Heart right ventricle (tissue), 16 donors: ENCODE measurements at regions of chr18 and their contacts with region 1.

Region 1: DNA sequence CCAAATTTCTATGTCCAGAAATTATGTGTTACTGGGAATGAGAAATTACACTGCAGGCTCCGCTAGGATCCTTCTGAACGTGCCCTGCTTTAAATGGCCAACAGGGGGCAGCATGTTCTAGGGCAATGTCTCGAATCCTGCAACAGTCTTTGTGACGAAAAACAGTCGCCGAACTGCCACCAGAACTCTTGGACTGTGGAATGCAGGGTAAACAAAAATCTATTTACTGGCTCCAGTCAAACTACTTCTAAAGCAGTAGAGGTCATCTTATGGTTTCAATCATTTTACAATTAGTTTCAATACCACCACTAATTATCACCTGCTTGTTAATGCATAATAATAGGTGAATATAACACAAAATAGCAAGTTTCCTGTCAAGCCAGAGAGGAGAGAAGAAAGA is 9.8 kb upstream of the ZNF397 start:
- DNase-seq: peak; percentile 68 to 88
- ATAC-seq: peak; percentile 80 to 95 (median 90)
- H3K4me3 ChIP-seq: peak overlapping the region in 4 of 10 donors; percentile 18 to 33 (median 20)
- H3K27ac ChIP-seq: no peak overlapping the region
- H3K4me1 ChIP-seq: peaks cover 0 to 3% (median 0%) of the 10 kb centered on the region in 9 donors
- H3K27me3 ChIP-seq: no peaks in the 10 kb centered on the region
- CTCF ChIP-seq: peak; percentile 84 to 98 (median 94)

Region 2: GRCh38 chr18:34929336-34929780 is 301.7 kb before region 1 on chr18:
- intact Hi-C with region 1: no loop called
- DNase-seq: no peak
- ATAC-seq: no peak
- H3K4me3 ChIP-seq: no peak overlapping the region
- H3K27ac ChIP-seq: no peak overlapping the region
- H3K4me1 ChIP-seq: peaks cover 0 to 6% (median 0%) of the 10 kb centered on the region in 9 donors
- H3K27me3 ChIP-seq: no peaks in the 10 kb centered on the region
- CTCF ChIP-seq: no peak

Region 3: DNA sequence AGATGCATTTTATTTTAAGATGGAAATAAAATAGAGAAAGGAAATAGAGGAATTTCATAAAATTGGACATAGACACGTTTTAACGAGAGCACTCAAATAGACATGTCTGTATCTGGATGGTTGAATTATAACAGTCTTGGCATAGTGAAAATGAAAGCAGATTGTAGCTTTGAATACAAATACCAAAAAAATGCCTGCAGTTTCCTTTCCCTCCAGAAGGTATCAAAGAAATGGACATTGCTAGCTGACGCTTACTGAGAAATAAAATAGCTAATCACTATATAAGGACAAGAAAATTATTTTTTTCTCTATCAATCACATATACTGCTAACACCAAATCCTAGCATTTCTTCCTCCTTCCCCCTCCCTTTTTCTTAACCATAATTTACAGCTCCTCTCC is 201.3 kb before region 1 on chr18:
- intact Hi-C with region 1: loop called in 1 of 10 experiments (anchors 10 kb)
- DNase-seq: no peak
- ATAC-seq: peak in 4 of 8 donors; percentile 39 to 56 (median 50)
- H3K4me3 ChIP-seq: peak overlapping the region in 9 of 10 donors; percentile 4 to 50 (median 36)
- H3K27ac ChIP-seq: peak overlapping the region in 9 of 10 donors; percentile 3 to 92 (median 42)
- H3K4me1 ChIP-seq: peaks cover 8 to 45% (median 30%) of the 10 kb centered on the region in 9 donors
- H3K27me3 ChIP-seq: no peaks in the 10 kb centered on the region
- CTCF ChIP-seq: peak in 4 of 9 donors; percentile 15 to 36 (median 28)

Region 4: GRCh38 chr18:35122586-35123224 is 108.3 kb before region 1 on chr18:
- intact Hi-C with region 1: no loop called
- DNase-seq: no peak
- ATAC-seq: peak in 7 of 8 donors; percentile 41 to 71 (median 60)
- H3K4me3 ChIP-seq: no peak overlapping the region
- H3K27ac ChIP-seq: peak overlapping the region in 6 of 10 donors; percentile 9 to 50 (median 23)
- H3K4me1 ChIP-seq: peaks cover 11 to 76% (median 56%) of the 10 kb centered on the region in 9 donors
- H3K27me3 ChIP-seq: no peaks in the 10 kb centered on the region
- CTCF ChIP-seq: peak in 6 of 9 donors; percentile 19 to 51 (median 39)

Region 5: DNA sequence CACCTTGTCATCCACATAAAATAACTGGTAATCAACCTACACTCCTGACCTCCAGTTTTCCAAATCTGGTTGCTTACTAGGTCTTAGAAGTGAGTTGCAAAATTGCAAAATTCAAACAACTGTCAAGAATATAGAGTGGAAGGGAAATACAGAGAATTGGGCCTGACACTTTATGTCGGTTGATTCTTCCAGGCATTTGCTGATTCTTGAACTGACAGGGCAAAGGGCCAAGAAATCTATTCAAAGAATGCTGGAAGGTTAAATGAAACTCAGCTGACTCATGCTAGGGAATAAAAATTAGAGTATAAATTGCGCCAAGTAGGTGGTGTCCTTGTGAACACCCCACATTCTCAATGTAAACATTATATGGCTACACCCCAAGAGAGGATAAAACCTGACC is 80.4 kb after region 1 on chr18:
- intact Hi-C with region 1: no loop called
- DNase-seq: no peak
- ATAC-seq: no peak
- H3K4me3 ChIP-seq: no peak overlapping the region
- H3K27ac ChIP-seq: peak overlapping the region in 1 of 10 donors; percentile 35
- H3K4me1 ChIP-seq: peaks cover 0 to 6% (median 0%) of the 10 kb centered on the region in 9 donors
- H3K27me3 ChIP-seq: no peaks in the 10 kb centered on the region
- CTCF ChIP-seq: no peak

Region 6: GRCh38 chr18:35355140-35355618 is 124.1 kb after region 1 on chr18:
- intact Hi-C with region 1: loop called (anchors 1 to 5 kb)
- DNase-seq: peak; percentile 54 to 75
- ATAC-seq: peak; percentile 87 to 99 (median 96)
- H3K4me3 ChIP-seq: peak overlapping the region in 4 of 10 donors; percentile 11 to 32 (median 30)
- H3K27ac ChIP-seq: no peak overlapping the region
- H3K4me1 ChIP-seq: peaks cover 0 to 8% (median 0%) of the 10 kb centered on the region in 9 donors
- H3K27me3 ChIP-seq: no peaks in the 10 kb centered on the region
- CTCF ChIP-seq: peak; percentile 51 to 85 (median 78)